ENCODE measurements at regions of chr12 and their contacts with region 1.

Region 1: GRCh38 chr12:51217968-51218606 is at the start of gene POU6F1:
- DNase-seq: peak; percentile 87
- ATAC-seq: peak; percentile 72
- H3K4me3 ChIP-seq: peak within 1 kb of the TSS; percentile 68 to 86 (median 71)
- H3K4me3 Mint-ChIP-seq: peak within 1 kb of the TSS; percentile 95
- H3K27ac ChIP-seq: peak within 1 kb of the TSS; percentile 85 to 93
- H3K27ac Mint-ChIP-seq: peak within 1 kb of the TSS; percentile 96
- H3K4me1 ChIP-seq: peaks cover 6 to 18% of the 10 kb centered on the region in 2 donors
- H3K4me1 Mint-ChIP-seq: peaks cover 19% of the 10 kb centered on the region
- H3K27me3 ChIP-seq: no peaks in the 10 kb centered on the region
- H3K27me3 Mint-ChIP-seq: no peaks in the 10 kb centered on the region
- CTCF ChIP-seq: peak; percentile 69
- total RNA-seq, gene POU6F1: 57.5 and 62.6 TPM in 2 replicates

Region 2: GRCh38 chr12:50297027-50297426 is 921.1 kb before region 1 on chr12:
- CTCF ChIA-PET with region 1: no interaction called
- POLR2A ChIA-PET with region 1: no interaction called
- intact Hi-C with region 1: no loop called
- DNase-seq: no peak
- ATAC-seq: no peak
- H3K4me3 ChIP-seq: no peak overlapping the region
- H3K4me3 Mint-ChIP-seq: no peak overlapping the region
- H3K27ac ChIP-seq: no peak overlapping the region
- H3K27ac Mint-ChIP-seq: no peak overlapping the region
- H3K4me1 ChIP-seq: no peaks in the 10 kb centered on the region
- H3K4me1 Mint-ChIP-seq: no peaks in the 10 kb centered on the region
- H3K27me3 ChIP-seq: no peaks in the 10 kb centered on the region
- H3K27me3 Mint-ChIP-seq: no peaks in the 10 kb centered on the region
- CTCF ChIP-seq: no peak

Region 3: GRCh38 chr12:51025836-51026638 is 192.1 kb before region 1 on chr12 and contains the start of gene SLC11A2:
- CTCF ChIA-PET with region 1: no interaction called
- POLR2A ChIA-PET with region 1: interaction called, 6 read pairs
- intact Hi-C with region 1: loop called (anchors 1 kb)
- DNase-seq: peak; percentile 92
- ATAC-seq: peak; percentile 98
- H3K4me3 ChIP-seq: peak within 1 kb of the TSS; percentile 34 to 97 (median 78)
- H3K4me3 Mint-ChIP-seq: peak within 1 kb of the TSS; percentile 94
- H3K27ac ChIP-seq: peak within 1 kb of the TSS; percentile 71 to 74
- H3K27ac Mint-ChIP-seq: peak within 1 kb of the TSS; percentile 93
- H3K4me1 ChIP-seq: peaks cover 13 to 28% of the 10 kb centered on the region in 2 donors
- H3K4me1 Mint-ChIP-seq: peaks cover 36% of the 10 kb centered on the region
- H3K27me3 ChIP-seq: peaks cover 0 to 3% (median 0%) of the 10 kb centered on the region in 4 experiments
- H3K27me3 Mint-ChIP-seq: peaks cover 4% of the 10 kb centered on the region
- CTCF ChIP-seq: no peak
- total RNA-seq, gene SLC11A2: 42.0 and 45.7 TPM in 2 replicates

Region 4: GRCh38 chr12:51083126-51083833 is 134.8 kb before region 1 on chr12 and contains the start of gene CSRNP2:
- CTCF ChIA-PET with region 1: interaction called, 6 read pairs
- POLR2A ChIA-PET with region 1: interaction called, 17 read pairs
- intact Hi-C with region 1: loop called (anchors 1 kb)
- DNase-seq: peak; percentile 96
- ATAC-seq: peak; percentile 99
- H3K4me3 ChIP-seq: peak within 1 kb of the TSS; percentile 54 to 87 (median 77)
- H3K4me3 Mint-ChIP-seq: peak within 1 kb of the TSS; percentile 96
- H3K27ac ChIP-seq: peak within 1 kb of the TSS; percentile 11 to 88
- H3K27ac Mint-ChIP-seq: peak within 1 kb of the TSS; percentile 88
- H3K4me1 ChIP-seq: peaks cover 9 to 17% of the 10 kb centered on the region in 2 donors
- H3K4me1 Mint-ChIP-seq: peaks cover 25% of the 10 kb centered on the region
- H3K27me3 ChIP-seq: no peaks in the 10 kb centered on the region
- H3K27me3 Mint-ChIP-seq: no peaks in the 10 kb centered on the region
- CTCF ChIP-seq: peak; percentile 20
- total RNA-seq, gene CSRNP2: 49.8 and 52.3 TPM in 2 replicates

Region 5: GRCh38 chr12:51118706-51119105 is 99.4 kb before region 1 on chr12:
- CTCF ChIA-PET with region 1: no interaction called
- POLR2A ChIA-PET with region 1: no interaction called
- intact Hi-C with region 1: no loop called
- DNase-seq: no peak
- ATAC-seq: no peak
- H3K4me3 ChIP-seq: no peak overlapping the region
- H3K4me3 Mint-ChIP-seq: no peak overlapping the region
- H3K27ac ChIP-seq: no peak overlapping the region
- H3K27ac Mint-ChIP-seq: no peak overlapping the region
- H3K4me1 ChIP-seq: no peaks in the 10 kb centered on the region
- H3K4me1 Mint-ChIP-seq: no peaks in the 10 kb centered on the region
- H3K27me3 ChIP-seq: no peaks in the 10 kb centered on the region
- H3K27me3 Mint-ChIP-seq: no peaks in the 10 kb centered on the region
- CTCF ChIP-seq: no peak

Region 6: DNA sequence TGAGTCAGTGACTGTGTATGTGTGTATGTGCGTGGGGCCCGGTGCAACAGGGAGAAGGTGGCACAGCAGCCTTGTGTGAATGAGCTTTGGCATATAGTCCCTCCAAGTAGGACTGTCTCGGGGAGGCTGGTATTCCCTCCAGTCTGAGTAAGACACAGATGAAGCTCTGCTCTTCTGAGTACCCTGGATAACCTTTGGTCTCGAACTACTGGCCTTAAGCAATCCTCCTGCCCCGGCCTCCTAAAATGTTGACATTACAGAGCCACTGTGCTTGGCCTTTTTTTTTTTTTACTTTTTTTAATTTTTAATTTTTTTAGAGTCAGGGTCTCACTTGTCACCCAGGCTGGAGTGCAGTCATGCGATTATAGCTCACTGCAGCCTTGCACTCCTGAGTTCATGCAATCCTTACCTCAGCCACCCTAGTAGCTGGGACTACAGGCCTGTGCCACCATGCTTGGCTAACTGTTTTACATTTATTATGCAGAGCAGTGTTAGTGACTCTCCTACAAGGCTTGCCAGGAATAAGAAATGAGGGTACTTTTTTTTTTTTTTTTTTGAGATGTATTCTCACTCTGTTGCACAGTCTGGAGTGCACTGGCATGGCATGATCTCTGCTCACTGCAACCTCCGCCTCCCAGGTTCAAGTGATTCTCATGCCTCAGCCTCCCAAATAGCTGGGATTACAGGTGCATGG is 11.2 kb after region 1 on chr12:
- CTCF ChIA-PET with region 1: interaction called, 15 read pairs
- POLR2A ChIA-PET with region 1: interaction called, 11 read pairs
- intact Hi-C with region 1: no loop called
- DNase-seq: no peak
- ATAC-seq: no peak
- H3K4me3 ChIP-seq: no peak overlapping the region
- H3K4me3 Mint-ChIP-seq: no peak overlapping the region
- H3K27ac ChIP-seq: no peak overlapping the region
- H3K27ac Mint-ChIP-seq: no peak overlapping the region
- H3K4me1 ChIP-seq: no peaks in the 10 kb centered on the region
- H3K4me1 Mint-ChIP-seq: no peaks in the 10 kb centered on the region
- H3K27me3 ChIP-seq: no peaks in the 10 kb centered on the region
- H3K27me3 Mint-ChIP-seq: no peaks in the 10 kb centered on the region
- CTCF ChIP-seq: no peak

Region 7: DNA sequence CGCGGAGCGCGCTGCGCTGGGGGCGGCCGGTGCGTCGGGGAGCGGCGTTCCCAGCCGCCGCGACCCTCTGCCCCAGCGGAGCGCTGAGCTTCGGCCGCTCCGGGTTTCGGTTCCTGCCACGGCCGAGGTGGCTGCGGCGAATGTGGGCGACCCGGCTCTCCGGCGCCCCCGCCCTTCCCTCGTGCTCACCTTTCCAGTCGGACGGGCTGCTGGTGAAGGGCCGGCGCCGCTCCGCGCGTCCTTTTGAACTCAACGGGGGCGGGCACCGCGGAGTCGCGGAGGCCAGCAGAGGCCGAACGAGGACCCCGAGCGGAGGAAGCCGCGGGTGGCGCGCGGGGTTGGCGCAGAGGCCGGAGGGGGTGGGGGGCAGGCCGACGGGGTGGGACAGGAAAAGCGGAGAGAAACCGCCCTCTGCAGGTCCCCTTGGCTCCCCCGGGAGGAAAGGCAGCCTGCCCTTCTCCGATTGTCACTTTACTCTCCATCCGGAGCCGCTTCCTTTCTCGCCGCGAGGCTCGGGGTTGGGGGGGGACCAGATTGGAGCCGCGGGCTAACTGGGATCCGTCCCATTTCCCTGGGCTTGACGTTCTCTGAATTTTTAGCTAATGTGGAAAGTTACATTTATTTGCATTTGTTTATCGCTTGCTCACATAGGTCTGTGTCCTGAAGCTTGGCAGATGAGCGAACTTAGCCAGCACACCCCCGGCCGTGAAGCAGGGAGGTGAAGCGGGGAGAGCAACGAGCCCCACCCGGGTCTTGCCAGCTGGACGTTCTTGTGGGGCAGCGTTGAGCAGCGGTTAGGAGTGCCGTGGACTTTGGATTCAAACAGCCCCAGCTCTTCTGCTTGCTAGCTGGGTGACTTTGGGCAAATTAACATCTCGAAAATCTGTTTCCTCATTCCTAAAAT is 52.2 kb after region 1 on chr12 and contains the start of gene SMAGP:
- CTCF ChIA-PET with region 1: interaction called, 3 read pairs
- POLR2A ChIA-PET with region 1: interaction called, 4 read pairs
- intact Hi-C with region 1: loop called (anchors 1 kb)
- DNase-seq: peak; percentile 79
- ATAC-seq: peak; percentile 75
- H3K4me3 ChIP-seq: peak within 1 kb of the TSS; percentile 52 to 86 (median 74)
- H3K4me3 Mint-ChIP-seq: peak within 1 kb of the TSS; percentile 95
- H3K27ac ChIP-seq: peak within 1 kb of the TSS; percentile 12 to 64
- H3K27ac Mint-ChIP-seq: peak within 1 kb of the TSS; percentile 91
- H3K4me1 ChIP-seq: peaks cover 19 to 20% of the 10 kb centered on the region in 2 donors
- H3K4me1 Mint-ChIP-seq: peaks cover 31% of the 10 kb centered on the region
- H3K27me3 ChIP-seq: no peaks in the 10 kb centered on the region
- H3K27me3 Mint-ChIP-seq: no peaks in the 10 kb centered on the region
- CTCF ChIP-seq: no peak
- total RNA-seq, gene SMAGP: 8.0 and 10.4 TPM in 2 replicates

Region 8: DNA sequence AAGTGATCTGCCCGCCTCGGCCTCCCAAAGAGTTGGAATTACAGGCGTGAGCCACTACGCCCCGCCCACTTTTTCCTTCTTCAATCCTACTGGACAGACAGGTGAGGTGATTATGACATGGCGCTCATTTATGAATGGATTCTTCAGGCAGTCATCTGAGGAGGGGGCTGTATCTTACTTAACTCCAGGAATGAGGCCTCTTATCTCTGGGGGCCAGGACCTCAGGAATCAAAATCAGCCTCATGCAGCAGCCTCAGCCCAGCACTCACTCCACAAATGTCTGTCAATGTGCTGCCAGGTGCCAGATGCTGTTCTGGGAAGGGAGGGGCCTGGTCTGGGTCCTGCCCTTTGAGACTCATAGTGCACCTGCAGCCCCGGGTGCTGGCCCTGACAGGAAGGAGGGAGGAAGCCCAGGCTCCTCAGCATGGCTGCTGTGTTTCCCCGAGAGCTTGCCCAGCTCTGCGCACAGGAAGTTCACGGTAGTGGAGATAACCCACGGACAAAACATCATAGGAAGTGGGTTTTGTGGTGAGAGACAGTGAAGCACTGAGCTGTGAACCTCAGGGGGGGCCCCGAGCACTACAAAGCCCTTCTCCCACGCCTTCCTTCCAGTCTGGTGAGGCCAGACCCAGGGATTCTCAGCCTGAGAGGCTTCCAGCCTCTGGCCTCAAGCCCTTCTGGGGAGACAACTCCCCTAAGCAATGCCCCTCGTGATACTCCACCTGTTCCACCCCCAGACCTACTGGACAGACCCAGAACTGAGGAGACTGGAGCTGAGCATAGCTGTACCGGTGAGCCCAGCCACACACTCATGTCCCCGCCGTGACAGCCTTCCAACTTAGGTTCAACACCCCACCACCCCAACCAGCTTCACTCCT is 150.8 kb after region 1 on chr12:
- CTCF ChIA-PET with region 1: no interaction called
- POLR2A ChIA-PET with region 1: interaction called, 17 read pairs
- intact Hi-C with region 1: no loop called
- DNase-seq: peak; percentile 98
- ATAC-seq: peak; percentile 96
- H3K4me3 ChIP-seq: peak overlapping the region in 4 of 5 experiments; percentile 14 to 44 (median 20)
- H3K4me3 Mint-ChIP-seq: peak overlapping the region; percentile 42
- H3K27ac ChIP-seq: peak overlapping the region; percentile 74 to 77
- H3K27ac Mint-ChIP-seq: peak overlapping the region; percentile 97
- H3K4me1 ChIP-seq: peaks cover 51 to 61% of the 10 kb centered on the region in 2 donors
- H3K4me1 Mint-ChIP-seq: peaks cover 54% of the 10 kb centered on the region
- H3K27me3 ChIP-seq: no peaks in the 10 kb centered on the region
- H3K27me3 Mint-ChIP-seq: no peaks in the 10 kb centered on the region
- CTCF ChIP-seq: no peak

Region 9: GRCh38 chr12:51449577-51450246 is 231.6 kb after region 1 on chr12:
- CTCF ChIA-PET with region 1: no interaction called
- POLR2A ChIA-PET with region 1: no interaction called
- intact Hi-C with region 1: no loop called
- DNase-seq: no peak
- ATAC-seq: no peak
- H3K4me3 ChIP-seq: no peak overlapping the region
- H3K4me3 Mint-ChIP-seq: no peak overlapping the region
- H3K27ac ChIP-seq: no peak overlapping the region
- H3K27ac Mint-ChIP-seq: no peak overlapping the region
- H3K4me1 ChIP-seq: no peaks in the 10 kb centered on the region
- H3K4me1 Mint-ChIP-seq: no peaks in the 10 kb centered on the region
- H3K27me3 ChIP-seq: no peaks in the 10 kb centered on the region
- H3K27me3 Mint-ChIP-seq: no peaks in the 10 kb centered on the region
- CTCF ChIP-seq: no peak

Region 10: GRCh38 chr12:51806896-51807295 is 588.8 kb after region 1 on chr12:
- CTCF ChIA-PET with region 1: no interaction called
- POLR2A ChIA-PET with region 1: no interaction called
- intact Hi-C with region 1: no loop called
- DNase-seq: no peak
- ATAC-seq: no peak
- H3K4me3 ChIP-seq: no peak overlapping the region
- H3K4me3 Mint-ChIP-seq: no peak overlapping the region
- H3K27ac ChIP-seq: no peak overlapping the region
- H3K27ac Mint-ChIP-seq: no peak overlapping the region
- H3K4me1 ChIP-seq: peaks cover 4 to 7% of the 10 kb centered on the region in 2 donors
- H3K4me1 Mint-ChIP-seq: peaks cover 11% of the 10 kb centered on the region
- H3K27me3 ChIP-seq: peaks cover 0 to 18% (median 9%) of the 10 kb centered on the region in 4 experiments
- H3K27me3 Mint-ChIP-seq: peaks cover 33% of the 10 kb centered on the region
- CTCF ChIP-seq: no peak